ENCODE measurements at regions of chr20 and their contacts with region 1.

Region 1: GRCh38 chr20:48904365-48905296 is 16.9 kb upstream of the ARFGEF2 start:
- DNase-seq: peak; percentile 64 to 69 (median 67)
- H3K4me3 ChIP-seq: no peak overlapping the region
- H3K4me3 Mint-ChIP-seq: no peak overlapping the region
- H3K27ac ChIP-seq: no peak overlapping the region
- H3K27ac Mint-ChIP-seq: peak overlapping the region in 3 of 7 donors; percentile 27 to 81 (median 58)
- H3K4me1 ChIP-seq: peaks cover 6% of the 10 kb centered on the region
- H3K4me1 Mint-ChIP-seq: peaks cover 2 to 6% (median 5%) of the 10 kb centered on the region in 4 donors
- H3K27me3 ChIP-seq: no peaks in the 10 kb centered on the region
- H3K27me3 Mint-ChIP-seq: no peaks in the 10 kb centered on the region

Region 2: GRCh38 chr20:48635433-48636310 is 269.0 kb before region 1 on chr20:
- CTCF ChIA-PET with region 1: interaction called, 34 read pairs
- POLR2A ChIA-PET with region 1: interaction called, 3 read pairs
- intact Hi-C with region 1: loop called (anchors 1 kb)
- DNase-seq: peak in 4 of 5 donors; percentile 58 to 66 (median 60)
- H3K4me3 ChIP-seq: no peak overlapping the region
- H3K4me3 Mint-ChIP-seq: peak overlapping the region in 1 of 8 donors; percentile 57
- H3K27ac ChIP-seq: no peak overlapping the region
- H3K27ac Mint-ChIP-seq: peak overlapping the region; percentile 52 to 89 (median 68)
- H3K4me1 ChIP-seq: no peaks in the 10 kb centered on the region
- H3K4me1 Mint-ChIP-seq: peaks cover 0 to 9% (median 3%) of the 10 kb centered on the region in 4 donors
- H3K27me3 ChIP-seq: no peaks in the 10 kb centered on the region
- H3K27me3 Mint-ChIP-seq: no peaks in the 10 kb centered on the region

Region 3: DNA sequence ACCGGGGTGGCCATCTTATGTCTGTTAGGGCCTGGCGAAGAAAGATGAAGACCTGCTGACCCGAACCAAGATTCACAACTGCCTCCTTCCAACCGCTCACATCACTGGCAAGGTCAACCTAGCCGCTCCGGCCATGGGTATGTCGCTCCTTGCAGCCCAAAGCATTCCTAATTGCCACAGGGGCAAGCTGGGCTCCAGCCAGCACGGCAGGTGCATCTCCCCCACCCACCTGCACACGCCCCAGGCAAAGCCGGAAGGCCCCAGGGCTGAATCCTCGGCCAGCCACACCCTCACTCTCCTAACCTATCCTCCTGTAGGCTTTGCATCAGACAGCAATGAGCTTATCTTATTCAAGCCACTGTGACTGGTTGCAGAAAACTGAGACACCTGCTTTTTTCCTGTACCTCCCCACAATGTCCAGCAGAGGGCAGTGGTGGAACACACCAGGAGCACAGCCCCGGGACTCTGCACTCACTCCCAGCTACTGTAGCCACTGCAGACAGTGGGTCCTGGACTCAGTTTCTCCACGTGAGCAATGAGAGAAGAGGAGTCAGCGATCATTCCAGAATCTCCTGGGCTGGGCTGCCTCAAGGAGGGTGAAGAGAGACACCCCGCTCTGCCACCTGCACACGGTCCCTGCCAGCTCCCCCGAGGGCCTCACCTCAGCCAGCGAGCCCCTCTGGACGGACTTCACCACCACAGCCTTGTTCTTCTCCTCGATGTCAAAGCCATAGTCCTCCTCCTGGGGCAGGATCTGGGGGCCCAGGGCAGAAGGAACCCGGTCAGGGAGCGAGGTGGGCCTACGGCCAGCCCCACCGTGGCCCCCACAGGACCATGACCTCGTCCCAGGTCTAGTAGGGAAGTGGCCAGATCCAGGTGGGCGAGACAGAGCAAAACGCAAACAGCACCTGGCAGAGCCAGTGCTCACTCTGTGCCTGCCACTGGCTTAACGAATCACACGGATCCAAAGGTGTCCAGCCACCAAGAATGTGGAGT is 246.9 kb before region 1 on chr20:
- CTCF ChIA-PET with region 1: interaction called, 162 read pairs
- POLR2A ChIA-PET with region 1: interaction called, 10 read pairs
- intact Hi-C with region 1: loop called (anchors 1 kb)
- DNase-seq: peak; percentile 64 to 74 (median 70)
- H3K4me3 ChIP-seq: no peak overlapping the region
- H3K4me3 Mint-ChIP-seq: peak overlapping the region in 2 of 8 donors; percentile 48 to 52
- H3K27ac ChIP-seq: no peak overlapping the region
- H3K27ac Mint-ChIP-seq: peak overlapping the region; percentile 22 to 87 (median 75)
- H3K4me1 ChIP-seq: no peaks in the 10 kb centered on the region
- H3K4me1 Mint-ChIP-seq: peaks cover 1 to 11% (median 7%) of the 10 kb centered on the region in 4 donors
- H3K27me3 ChIP-seq: no peaks in the 10 kb centered on the region
- H3K27me3 Mint-ChIP-seq: no peaks in the 10 kb centered on the region

Region 4: GRCh38 chr20:48799706-48800105 is 104.9 kb before region 1 on chr20:
- CTCF ChIA-PET with region 1: no interaction called
- POLR2A ChIA-PET with region 1: no interaction called
- intact Hi-C with region 1: no loop called
- DNase-seq: no peak
- H3K4me3 ChIP-seq: no peak overlapping the region
- H3K4me3 Mint-ChIP-seq: peak overlapping the region in 3 of 8 donors; percentile 10 to 25 (median 20)
- H3K27ac ChIP-seq: no peak overlapping the region
- H3K27ac Mint-ChIP-seq: peak overlapping the region; percentile 50 to 89 (median 67)
- H3K4me1 ChIP-seq: peaks cover 98% of the 10 kb centered on the region
- H3K4me1 Mint-ChIP-seq: peaks cover 67 to 94% (median 82%) of the 10 kb centered on the region in 4 donors
- H3K27me3 ChIP-seq: no peaks in the 10 kb centered on the region
- H3K27me3 Mint-ChIP-seq: no peaks in the 10 kb centered on the region

Region 5: GRCh38 chr20:48875911-48876640 is 28.6 kb before region 1 on chr20:
- CTCF ChIA-PET with region 1: interaction called, 14 read pairs
- POLR2A ChIA-PET with region 1: no interaction called
- intact Hi-C with region 1: no loop called
- DNase-seq: no peak
- H3K4me3 ChIP-seq: no peak overlapping the region
- H3K4me3 Mint-ChIP-seq: no peak overlapping the region
- H3K27ac ChIP-seq: no peak overlapping the region
- H3K27ac Mint-ChIP-seq: peak overlapping the region in 4 of 7 donors; percentile 18 to 59 (median 41)
- H3K4me1 ChIP-seq: peaks cover 7% of the 10 kb centered on the region
- H3K4me1 Mint-ChIP-seq: peaks cover 9 to 13% (median 9%) of the 10 kb centered on the region in 4 donors
- H3K27me3 ChIP-seq: no peaks in the 10 kb centered on the region
- H3K27me3 Mint-ChIP-seq: no peaks in the 10 kb centered on the region

Region 6: DNA sequence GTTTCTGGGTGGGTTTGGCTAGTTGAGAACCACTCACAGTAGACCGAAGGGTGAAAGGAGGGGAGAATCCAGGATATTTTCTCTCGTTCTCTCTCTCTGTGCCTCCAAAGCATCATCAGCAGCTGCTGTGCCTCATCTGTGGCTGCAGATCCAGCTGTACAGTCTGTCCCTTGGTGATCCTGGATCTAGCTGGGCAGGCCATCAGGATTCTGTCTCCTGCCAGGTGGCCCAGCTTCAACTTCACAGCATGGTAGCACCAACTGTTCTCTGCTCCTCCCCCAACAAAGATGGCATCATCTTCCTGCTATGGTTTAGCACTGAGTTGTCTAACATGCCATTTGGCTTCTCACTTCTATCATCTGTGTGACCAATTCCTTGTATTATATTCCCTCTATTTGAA is 11.8 kb before region 1 on chr20:
- CTCF ChIA-PET with region 1: interaction called, 12 read pairs
- POLR2A ChIA-PET with region 1: no interaction called
- intact Hi-C with region 1: no loop called
- DNase-seq: no peak
- H3K4me3 ChIP-seq: no peak overlapping the region
- H3K4me3 Mint-ChIP-seq: no peak overlapping the region
- H3K27ac ChIP-seq: no peak overlapping the region
- H3K27ac Mint-ChIP-seq: no peak overlapping the region
- H3K4me1 ChIP-seq: no peaks in the 10 kb centered on the region
- H3K4me1 Mint-ChIP-seq: peaks cover 0 to 6% (median 0%) of the 10 kb centered on the region in 4 donors
- H3K27me3 ChIP-seq: no peaks in the 10 kb centered on the region
- H3K27me3 Mint-ChIP-seq: peaks cover 0 to 2% of the 10 kb centered on the region in 2 donors